ENCODE measurements at regions of chr2 and their contacts with region 1.

Region 1: GRCh38 chr2:45821564-45822271 is 170.2 kb downstream of the PRKCE start:
- DNase-seq: no peak

Region 2: GRCh38 chr2:45712570-45712969 is 109.1 kb before region 1 on chr2:
- intact Hi-C with region 1: no loop called
- DNase-seq: peak; percentile 44

Region 3: DNA sequence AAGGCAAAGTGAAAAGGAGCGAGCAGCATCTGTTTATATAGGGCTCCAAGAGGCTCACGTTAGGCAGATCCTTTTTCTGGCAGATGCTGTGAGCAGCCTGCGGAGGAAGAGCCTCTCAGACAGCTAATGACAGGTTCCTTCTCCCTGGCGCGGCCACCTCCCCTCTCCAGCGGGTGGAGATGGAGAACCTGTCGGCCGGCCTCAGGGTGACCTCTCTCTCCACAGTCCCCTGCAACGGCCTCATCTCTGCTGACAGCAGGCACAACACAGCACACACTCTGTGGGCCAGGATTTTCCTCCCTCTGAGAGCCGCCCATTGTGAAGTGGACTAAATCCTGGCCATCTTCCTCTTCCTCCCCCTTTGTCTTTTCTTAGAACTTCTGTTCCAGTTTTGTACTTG is 50.5 kb before region 1 on chr2:
- intact Hi-C with region 1: loop called (anchors 5 kb)
- DNase-seq: peak; percentile 87

Region 4: GRCh38 chr2:45882707-45883602 is 61.2 kb after region 1 on chr2:
- intact Hi-C with region 1: loop called (anchors 2 kb)
- DNase-seq: no peak

Region 5: GRCh38 chr2:45929674-45930395 is 108.1 kb after region 1 on chr2:
- intact Hi-C with region 1: loop called (anchors 2 kb)
- DNase-seq: no peak